Activated B cell treated with CpG ODN at 0.5 μM for 24 hours (primary cell): ENCODE measurements at regions of chrX and their contacts with region 1.

Region 1: DNA sequence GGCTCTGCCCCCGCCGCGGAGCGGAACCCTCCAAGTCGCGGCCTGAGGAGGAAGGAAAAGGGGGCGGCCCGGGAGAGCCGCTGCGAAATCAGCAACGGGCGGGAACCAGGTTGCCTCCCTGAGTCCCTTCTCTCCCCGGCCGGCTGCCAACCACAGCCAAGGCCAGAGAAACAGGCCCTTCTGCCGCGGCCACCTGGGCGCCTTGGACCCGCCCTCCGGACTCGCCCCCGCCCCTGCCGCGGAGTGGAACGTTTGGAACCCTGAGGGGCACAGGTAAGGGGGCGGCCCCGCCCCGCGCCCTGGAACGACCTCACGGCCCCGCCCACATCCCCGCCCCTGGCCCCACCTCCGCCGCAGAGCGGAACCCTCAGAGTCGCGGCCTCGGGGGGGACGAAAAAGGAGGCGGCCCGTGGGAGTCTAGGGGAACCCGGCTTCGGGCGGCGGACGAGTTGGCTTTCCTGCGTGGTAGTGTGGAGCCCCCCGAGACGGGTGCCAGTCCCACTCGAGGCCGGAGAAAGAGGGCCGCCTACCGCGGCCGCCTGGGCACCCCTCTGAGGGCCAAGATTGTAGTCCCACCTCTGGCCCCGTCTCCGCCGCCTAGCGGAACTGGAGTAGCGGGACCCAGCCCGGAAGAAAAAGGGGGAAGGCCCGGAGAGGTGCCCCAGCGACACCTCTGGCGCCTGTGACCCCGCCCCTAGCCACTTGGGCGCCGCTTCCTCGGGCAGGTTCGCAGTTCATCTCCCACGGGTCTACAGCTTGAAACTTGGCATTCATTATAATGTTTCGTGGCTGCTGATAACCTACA is 669 bp upstream of the PHKA2 start:
- DNase-seq: peak; percentile 72
- ATAC-seq: peak; percentile 86
- H3K4me3 Mint-ChIP-seq: peak overlapping the region; percentile 87
- H3K27ac Mint-ChIP-seq: peak overlapping the region; percentile 89
- H3K4me1 Mint-ChIP-seq: peaks cover 15% of the 10 kb centered on the region
- H3K27me3 Mint-ChIP-seq: no peaks in the 10 kb centered on the region
- CTCF ChIP-seq: no peak

Region 2: DNA sequence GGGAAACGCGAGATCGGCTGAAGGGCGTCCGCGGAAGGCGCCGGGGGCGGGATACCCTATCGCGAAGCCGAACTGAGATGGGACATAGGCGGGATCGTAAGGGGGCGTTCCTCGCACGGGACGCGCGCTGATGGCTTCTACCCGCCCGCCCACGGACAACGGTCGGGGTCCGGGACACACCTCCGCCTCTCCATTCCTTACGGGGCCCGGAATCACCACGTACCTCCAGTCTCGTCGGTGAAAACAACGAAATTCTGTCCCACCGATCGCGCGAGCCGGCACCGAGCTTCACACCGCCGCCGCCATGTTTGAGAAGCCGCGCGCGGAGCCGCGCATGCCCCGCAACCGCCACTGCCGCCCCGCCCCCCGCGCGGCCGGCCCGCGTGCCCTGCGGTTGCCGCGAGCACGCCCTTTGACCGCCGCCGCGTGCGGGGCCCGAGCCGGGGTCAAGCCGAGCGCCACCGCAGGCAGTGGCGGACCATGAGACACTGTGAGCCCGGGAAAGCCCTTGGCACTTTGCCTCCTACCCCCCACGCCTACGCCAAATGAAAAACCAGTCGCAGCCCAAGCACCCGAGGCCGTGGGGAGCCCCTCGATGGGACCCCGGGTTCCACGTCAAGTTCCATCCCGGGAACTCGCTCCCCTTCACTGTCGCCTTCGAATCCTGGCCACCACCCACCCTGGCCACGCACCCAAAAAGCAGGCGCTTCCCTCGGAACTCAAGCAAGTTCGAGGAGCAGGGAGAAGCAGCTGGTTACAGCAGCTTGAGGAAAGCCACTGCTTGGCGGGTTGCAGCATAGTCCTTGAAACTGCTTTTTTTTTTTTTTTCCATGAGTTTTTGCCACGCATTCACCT is 630.0 kb before region 1 on chrX and contains the start of gene SCML2:
- CTCF ChIA-PET with region 1: no interaction called
- POLR2A ChIA-PET with region 1: no interaction called
- intact Hi-C with region 1: loop called (anchors 5 kb)
- DNase-seq: peak; percentile 45
- ATAC-seq: peak; percentile 78
- H3K4me3 Mint-ChIP-seq: peak within 1 kb of the TSS; percentile 85
- H3K27ac Mint-ChIP-seq: no peak within 1 kb of the TSS
- H3K4me1 Mint-ChIP-seq: peaks cover 6% of the 10 kb centered on the region
- H3K27me3 Mint-ChIP-seq: no peaks in the 10 kb centered on the region
- CTCF ChIP-seq: no peak
- total RNA-seq, gene SCML2: 1.3 and 2.1 TPM in 2 replicates

Region 3: DNA sequence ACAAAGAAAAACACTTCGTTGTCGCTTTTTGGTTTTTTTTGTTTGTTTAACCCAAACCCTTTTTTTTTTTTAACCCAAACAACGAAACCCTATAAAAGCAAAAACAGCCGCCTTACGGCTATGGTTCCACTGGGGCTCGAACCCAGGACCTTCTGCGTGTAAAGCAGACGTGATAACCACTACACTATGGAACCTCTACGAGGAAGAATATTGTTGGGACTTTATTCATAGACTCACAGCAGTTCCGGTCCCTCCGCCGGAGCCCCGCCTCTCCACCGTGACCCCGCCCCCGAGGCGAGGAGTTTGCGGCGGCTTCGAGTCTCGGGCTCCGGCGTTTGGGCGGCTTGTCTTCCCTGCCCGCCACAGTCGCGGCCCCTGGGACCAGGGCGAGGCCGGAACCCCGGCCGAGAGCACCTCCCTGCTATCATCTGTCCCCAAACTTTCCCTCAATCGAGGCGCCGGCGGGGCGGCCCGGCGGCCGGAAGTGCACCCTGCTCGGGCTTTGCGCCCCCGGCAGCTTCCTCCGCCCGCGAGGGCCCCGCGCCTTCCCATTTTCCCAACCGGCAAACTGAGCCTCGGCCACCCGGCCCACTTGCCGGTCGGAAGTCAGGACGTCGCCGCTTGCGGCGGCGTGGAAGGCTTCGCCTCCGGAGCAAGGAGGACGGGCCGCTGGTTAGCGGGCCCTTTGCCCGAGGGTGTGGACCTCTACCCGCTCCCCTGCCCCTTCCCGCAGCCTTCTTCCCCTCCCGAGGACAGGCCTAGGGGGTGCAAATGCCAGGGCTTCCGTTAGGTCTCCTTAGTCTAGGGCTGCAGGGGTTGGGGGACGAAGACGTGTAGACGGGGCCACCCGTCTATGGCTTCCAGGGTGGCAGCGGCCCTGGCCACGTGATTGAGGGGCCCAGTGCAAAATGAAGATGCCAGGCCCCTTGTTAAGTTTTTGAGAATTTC is 309.5 kb before region 1 on chrX:
- CTCF ChIA-PET with region 1: no interaction called
- POLR2A ChIA-PET with region 1: interaction called, 10 read pairs
- intact Hi-C with region 1: loop called (anchors 1 kb)
- DNase-seq: peak; percentile 75
- ATAC-seq: peak; percentile 88
- H3K4me3 Mint-ChIP-seq: peak overlapping the region; percentile 82
- H3K27ac Mint-ChIP-seq: peak overlapping the region; percentile 85
- H3K4me1 Mint-ChIP-seq: peaks cover 12% of the 10 kb centered on the region
- H3K27me3 Mint-ChIP-seq: no peaks in the 10 kb centered on the region
- CTCF ChIP-seq: no peak

Region 4: GRCh38 chrX:18961686-18962085 is 22.9 kb before region 1 on chrX:
- CTCF ChIA-PET with region 1: no interaction called
- POLR2A ChIA-PET with region 1: no interaction called
- intact Hi-C with region 1: no loop called
- DNase-seq: no peak
- ATAC-seq: no peak
- H3K4me3 Mint-ChIP-seq: no peak overlapping the region
- H3K27ac Mint-ChIP-seq: no peak overlapping the region
- H3K4me1 Mint-ChIP-seq: peaks cover 11% of the 10 kb centered on the region
- H3K27me3 Mint-ChIP-seq: no peaks in the 10 kb centered on the region
- CTCF ChIP-seq: no peak

Region 5: GRCh38 chrX:19343535-19344408 is 359.2 kb after region 1 on chrX and contains the start of gene PDHA1:
- CTCF ChIA-PET with region 1: no interaction called
- POLR2A ChIA-PET with region 1: no interaction called
- intact Hi-C with region 1: loop called (anchors 1 kb)
- DNase-seq: peak; percentile 81
- ATAC-seq: peak; percentile 98
- H3K4me3 Mint-ChIP-seq: peak within 1 kb of the TSS; percentile 88
- H3K27ac Mint-ChIP-seq: peak within 1 kb of the TSS; percentile 83
- H3K4me1 Mint-ChIP-seq: peaks cover 14% of the 10 kb centered on the region
- H3K27me3 Mint-ChIP-seq: peaks cover 1% of the 10 kb centered on the region
- CTCF ChIP-seq: no peak
- total RNA-seq, gene PDHA1: 122 and 124 TPM in 2 replicates

Region 6: DNA sequence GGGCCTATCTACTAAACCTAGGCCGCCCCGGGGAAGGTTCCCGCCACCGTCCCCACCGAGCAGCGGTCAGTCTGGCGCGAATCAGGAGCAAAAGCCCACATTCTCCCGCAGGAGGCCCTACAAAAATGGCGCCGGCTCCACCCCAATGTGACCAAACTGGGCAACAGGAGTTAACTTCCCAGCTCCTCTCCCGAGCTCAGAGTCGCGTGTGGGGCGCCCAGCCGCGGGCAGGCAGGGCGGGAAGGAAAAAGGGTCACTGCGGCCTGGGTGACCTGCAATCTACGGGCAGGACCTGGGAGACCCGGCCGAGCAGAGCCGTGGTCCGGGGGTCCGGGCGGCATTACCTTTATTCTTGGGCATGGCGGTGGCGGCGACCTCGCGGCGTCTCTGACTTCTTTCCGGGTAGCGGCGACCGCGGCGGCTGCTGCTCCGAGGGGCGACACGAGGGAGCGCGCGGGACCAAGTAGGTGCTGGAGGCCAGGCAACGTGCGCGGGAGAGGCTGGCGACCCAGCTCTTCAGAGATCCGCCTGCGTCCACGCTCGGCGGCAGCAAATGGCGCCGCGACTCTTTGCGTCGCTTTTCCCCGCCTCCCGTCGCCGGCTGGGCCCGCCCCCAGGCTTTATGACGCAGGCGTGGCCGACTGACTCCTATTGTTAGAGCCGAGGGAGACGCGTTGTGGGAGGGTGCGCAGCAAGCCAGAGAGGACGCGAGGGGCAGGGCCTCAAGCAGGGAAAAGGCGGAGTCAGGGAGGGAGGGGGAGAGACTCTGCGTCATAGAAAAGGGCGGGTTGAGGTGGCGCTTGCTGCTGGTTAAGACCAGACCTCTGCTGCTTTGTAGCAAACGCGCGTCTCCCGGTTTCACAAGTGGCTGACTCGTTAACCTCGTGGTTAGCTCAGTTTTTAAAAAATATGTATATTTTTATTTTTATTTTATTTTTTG is 1157.0 kb after region 1 on chrX and contains the start of gene EIF1AX:
- CTCF ChIA-PET with region 1: no interaction called
- POLR2A ChIA-PET with region 1: no interaction called
- intact Hi-C with region 1: loop called (anchors 2 kb)
- DNase-seq: peak; percentile 88
- ATAC-seq: peak; percentile 99
- H3K4me3 Mint-ChIP-seq: peak within 1 kb of the TSS; percentile 88
- H3K27ac Mint-ChIP-seq: peak within 1 kb of the TSS; percentile 83
- H3K4me1 Mint-ChIP-seq: peaks cover 23% of the 10 kb centered on the region
- H3K27me3 Mint-ChIP-seq: no peaks in the 10 kb centered on the region
- CTCF ChIP-seq: no peak
- total RNA-seq, gene EIF1AX: 58.8 and 59.4 TPM in 2 replicates